ENCODE measurements at regions of chr5 and their contacts with region 1.

Region 1: GRCh38 chr5:43389679-43390329 is 22.4 kb downstream of the CCL28 start:
- H3K4me3 Mint-ChIP-seq: no peak overlapping the region
- H3K27ac Mint-ChIP-seq: peak overlapping the region; percentile 4
- H3K4me1 Mint-ChIP-seq: peaks cover 18% of the 10 kb centered on the region
- H3K27me3 Mint-ChIP-seq: no peaks in the 10 kb centered on the region

Region 2: GRCh38 chr5:43227655-43228054 is 162.1 kb before region 1 on chr5:
- intact Hi-C with region 1: loop called (anchors 2 kb)
- H3K4me3 Mint-ChIP-seq: no peak overlapping the region
- H3K27ac Mint-ChIP-seq: no peak overlapping the region
- H3K4me1 Mint-ChIP-seq: no peaks in the 10 kb centered on the region
- H3K27me3 Mint-ChIP-seq: no peaks in the 10 kb centered on the region

Region 3: GRCh38 chr5:43367909-43368648 is 21.7 kb before region 1 on chr5:
- intact Hi-C with region 1: no loop called
- H3K4me3 Mint-ChIP-seq: no peak overlapping the region
- H3K27ac Mint-ChIP-seq: no peak overlapping the region
- H3K4me1 Mint-ChIP-seq: peaks cover 5% of the 10 kb centered on the region
- H3K27me3 Mint-ChIP-seq: no peaks in the 10 kb centered on the region

Measured in dendritic cell treated with granulocyte-macrophage colony-stimulating factor and Interleukin-4, amounts not matched to agents 40 ng/mL and 50 ng/mL, for 4 days (primary cell).